ENCODE measurements at regions of chr6 and their contacts with region 1.

Region 1: GRCh38 chr6:83057705-83058321 is 7.8 kb downstream of the UBE3D start:
- DNase-seq: peak; percentile 37
- H3K4me3 ChIP-seq: no peak overlapping the region
- H3K27ac ChIP-seq: no peak overlapping the region
- H3K4me1 ChIP-seq: no peaks in the 10 kb centered on the region
- H3K27me3 ChIP-seq: no peaks in the 10 kb centered on the region
- CTCF ChIP-seq: peak; percentile 78 to 81

Region 2: DNA sequence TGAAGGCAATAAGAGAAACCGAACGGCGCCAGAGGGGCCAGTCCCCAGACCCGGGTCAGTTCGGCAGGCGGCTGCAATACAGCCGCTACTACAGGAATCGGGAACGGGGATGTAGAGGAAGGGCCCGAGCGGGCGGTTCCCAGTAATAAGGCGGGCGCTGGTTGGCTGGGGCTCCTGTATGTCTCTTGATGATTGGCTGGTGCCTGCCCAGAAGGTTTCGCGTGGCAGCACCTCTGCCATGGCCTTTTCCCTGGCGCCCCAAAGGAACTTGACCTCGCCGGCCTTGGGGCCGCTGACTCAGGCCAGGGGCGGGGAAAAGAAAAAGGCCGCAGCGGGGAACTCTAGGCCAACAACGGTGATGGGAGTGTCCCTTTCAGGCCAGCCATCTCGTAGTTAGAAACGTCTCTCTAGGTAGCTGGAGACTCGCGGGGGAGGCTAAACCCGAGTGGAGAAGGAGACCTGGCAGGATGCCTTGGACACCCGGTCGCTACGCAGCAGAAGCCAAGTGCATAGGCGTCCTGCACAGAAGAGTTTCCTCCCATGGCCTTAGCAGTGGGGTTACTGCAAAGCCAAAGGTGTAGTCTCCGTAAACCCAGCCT is 810.1 kb before region 1 on chr6 and contains the start of gene IBTK:
- CTCF ChIA-PET with region 1: no interaction called
- dilution Hi-C with region 1: no loop called
- in situ Hi-C with region 1: loop called in 1 of 2 experiments (anchors 10 kb)
- intact Hi-C with region 1: loop called (anchors 1 kb)
- DNase-seq: peak; percentile 88
- H3K4me3 ChIP-seq: peak within 1 kb of the TSS; percentile 69 to 89 (median 87)
- H3K27ac ChIP-seq: peak within 1 kb of the TSS; percentile 86
- H3K4me1 ChIP-seq: peaks cover 18% of the 10 kb centered on the region
- H3K27me3 ChIP-seq: no peaks in the 10 kb centered on the region
- CTCF ChIP-seq: no peak
- total RNA-seq, gene IBTK: 39.1 to 49.2 TPM

Region 3: GRCh38 chr6:82331031-82331773 is 726.6 kb before region 1 on chr6:
- CTCF ChIA-PET with region 1: no interaction called
- dilution Hi-C with region 1: no loop called
- in situ Hi-C with region 1: no loop called
- intact Hi-C with region 1: loop called (anchors 1 kb)
- DNase-seq: peak; percentile 92
- H3K4me3 ChIP-seq: no peak overlapping the region
- H3K27ac ChIP-seq: peak overlapping the region; percentile 2
- H3K4me1 ChIP-seq: peaks cover 14% of the 10 kb centered on the region
- H3K27me3 ChIP-seq: no peaks in the 10 kb centered on the region
- CTCF ChIP-seq: peak; percentile 15 to 47

Region 4: GRCh38 chr6:82541306-82541705 is 516.5 kb before region 1 on chr6:
- CTCF ChIA-PET with region 1: no interaction called
- dilution Hi-C with region 1: no loop called
- in situ Hi-C with region 1: no loop called
- intact Hi-C with region 1: loop called (anchors 2 kb)
- DNase-seq: no peak
- H3K4me3 ChIP-seq: no peak overlapping the region
- H3K27ac ChIP-seq: no peak overlapping the region
- H3K4me1 ChIP-seq: no peaks in the 10 kb centered on the region
- H3K27me3 ChIP-seq: no peaks in the 10 kb centered on the region
- CTCF ChIP-seq: no peak

Region 5: GRCh38 chr6:82616386-82617028 is 441.3 kb before region 1 on chr6:
- CTCF ChIA-PET with region 1: no interaction called
- dilution Hi-C with region 1: no loop called
- in situ Hi-C with region 1: loop called in 1 of 2 experiments (anchors 10 kb)
- intact Hi-C with region 1: loop called (anchors 10 kb)
- DNase-seq: no peak
- H3K4me3 ChIP-seq: no peak overlapping the region
- H3K27ac ChIP-seq: no peak overlapping the region
- H3K4me1 ChIP-seq: no peaks in the 10 kb centered on the region
- H3K27me3 ChIP-seq: no peaks in the 10 kb centered on the region
- CTCF ChIP-seq: peak; percentile 2 to 38

Region 6: DNA sequence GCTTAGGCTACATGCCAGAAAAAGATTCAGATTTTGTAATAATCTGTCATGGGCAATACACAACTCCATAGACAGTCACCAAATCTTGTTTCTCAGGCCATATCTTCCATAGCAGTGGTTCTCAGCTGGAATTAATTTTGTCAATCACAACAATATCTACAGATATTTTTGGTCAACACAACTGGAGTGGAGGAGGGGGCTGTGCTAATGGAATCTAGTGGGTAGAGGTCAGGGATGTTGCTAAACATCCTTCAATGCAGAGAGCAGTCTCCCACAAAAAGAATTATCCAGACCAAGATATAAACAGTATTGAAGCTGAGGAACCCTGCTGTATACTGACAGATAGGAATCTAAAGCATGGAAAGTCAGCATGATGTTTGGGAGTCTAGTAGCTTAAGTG is 166.7 kb before region 1 on chr6:
- CTCF ChIA-PET with region 1: no interaction called
- dilution Hi-C with region 1: no loop called
- in situ Hi-C with region 1: no loop called
- intact Hi-C with region 1: loop called (anchors 10 kb)
- DNase-seq: no peak
- H3K4me3 ChIP-seq: no peak overlapping the region
- H3K27ac ChIP-seq: no peak overlapping the region
- H3K4me1 ChIP-seq: peaks cover 5% of the 10 kb centered on the region
- H3K27me3 ChIP-seq: no peaks in the 10 kb centered on the region
- CTCF ChIP-seq: no peak

Measured in mammary epithelial cell (primary cell).